B cell (primary cell): ENCODE measurements at regions of chr11 and their contacts with region 1.

Region 1: GRCh38 chr11:68839054-68839865 is 2.5 kb downstream of the CPT1A start:
- DNase-seq: peak; percentile 94
- ATAC-seq: peak; percentile 64
- H3K4me3 ChIP-seq: peak overlapping the region; percentile 27 to 76 (median 70)
- H3K4me3 Mint-ChIP-seq: peak overlapping the region; percentile 93
- H3K27ac ChIP-seq: peak overlapping the region; percentile 68 to 76
- H3K27ac Mint-ChIP-seq: peak overlapping the region; percentile 97
- H3K4me1 ChIP-seq: peaks cover 37 to 57% of the 10 kb centered on the region in 2 donors
- H3K4me1 Mint-ChIP-seq: peaks cover 57% of the 10 kb centered on the region
- H3K27me3 ChIP-seq: no peaks in the 10 kb centered on the region
- H3K27me3 Mint-ChIP-seq: no peaks in the 10 kb centered on the region
- CTCF ChIP-seq: no peak

Region 2: GRCh38 chr11:68271781-68272608 is 567.3 kb before region 1 on chr11 and contains the start of gene C11orf24:
- CTCF ChIA-PET with region 1: no interaction called
- POLR2A ChIA-PET with region 1: no interaction called
- intact Hi-C with region 1: loop called (anchors 2 kb)
- DNase-seq: peak; percentile 98
- ATAC-seq: peak; percentile 74
- H3K4me3 ChIP-seq: peak within 1 kb of the TSS; percentile 62 to 99 (median 98)
- H3K4me3 Mint-ChIP-seq: peak within 1 kb of the TSS; percentile 91
- H3K27ac ChIP-seq: peak within 1 kb of the TSS; percentile 98
- H3K27ac Mint-ChIP-seq: peak within 1 kb of the TSS; percentile 97
- H3K4me1 ChIP-seq: peaks cover 58 to 70% of the 10 kb centered on the region in 2 donors
- H3K4me1 Mint-ChIP-seq: peaks cover 74% of the 10 kb centered on the region
- H3K27me3 ChIP-seq: no peaks in the 10 kb centered on the region
- H3K27me3 Mint-ChIP-seq: no peaks in the 10 kb centered on the region
- CTCF ChIP-seq: no peak
- total RNA-seq, gene C11orf24: 81.8 and 88.6 TPM in 2 replicates

Region 3: DNA sequence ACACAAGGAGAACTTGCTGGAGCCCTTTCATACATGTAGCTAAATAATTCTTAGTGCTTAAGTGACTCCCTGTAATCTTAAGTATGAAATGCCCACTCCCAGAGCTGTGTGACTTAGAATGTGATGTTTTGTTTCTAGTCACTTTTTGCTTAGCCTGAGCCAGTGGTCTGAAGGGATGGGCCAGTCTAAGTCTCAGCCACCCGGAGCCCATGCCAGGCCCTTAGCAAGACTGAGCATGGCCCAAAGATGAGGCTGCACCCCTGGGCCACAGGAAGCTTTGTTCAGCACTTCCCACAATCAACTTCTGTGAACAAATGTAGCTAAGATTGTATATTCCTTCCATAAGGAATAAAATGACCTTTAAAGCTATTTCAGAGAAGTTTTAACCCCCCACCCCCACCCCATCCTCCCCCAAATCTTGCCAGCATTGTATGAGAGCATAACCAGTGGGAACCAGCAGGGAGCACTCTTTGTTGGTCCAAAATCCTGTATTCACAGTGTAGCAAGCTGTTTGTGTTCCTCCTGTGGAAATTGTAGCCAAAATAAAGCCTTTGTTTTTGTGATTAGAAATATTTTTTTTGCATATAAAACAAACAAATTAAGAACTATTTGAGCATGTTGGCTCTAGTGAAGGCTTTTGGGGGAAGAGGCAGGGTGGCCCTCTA is 228.7 kb before region 1 on chr11:
- CTCF ChIA-PET with region 1: interaction called, 14 read pairs
- POLR2A ChIA-PET with region 1: no interaction called
- intact Hi-C with region 1: loop called (anchors 10 kb)
- DNase-seq: no peak
- ATAC-seq: no peak
- H3K4me3 ChIP-seq: no peak overlapping the region
- H3K4me3 Mint-ChIP-seq: no peak overlapping the region
- H3K27ac ChIP-seq: no peak overlapping the region
- H3K27ac Mint-ChIP-seq: no peak overlapping the region
- H3K4me1 ChIP-seq: no peaks in the 10 kb centered on the region
- H3K4me1 Mint-ChIP-seq: no peaks in the 10 kb centered on the region
- H3K27me3 ChIP-seq: no peaks in the 10 kb centered on the region
- H3K27me3 Mint-ChIP-seq: no peaks in the 10 kb centered on the region
- CTCF ChIP-seq: no peak

Region 4: DNA sequence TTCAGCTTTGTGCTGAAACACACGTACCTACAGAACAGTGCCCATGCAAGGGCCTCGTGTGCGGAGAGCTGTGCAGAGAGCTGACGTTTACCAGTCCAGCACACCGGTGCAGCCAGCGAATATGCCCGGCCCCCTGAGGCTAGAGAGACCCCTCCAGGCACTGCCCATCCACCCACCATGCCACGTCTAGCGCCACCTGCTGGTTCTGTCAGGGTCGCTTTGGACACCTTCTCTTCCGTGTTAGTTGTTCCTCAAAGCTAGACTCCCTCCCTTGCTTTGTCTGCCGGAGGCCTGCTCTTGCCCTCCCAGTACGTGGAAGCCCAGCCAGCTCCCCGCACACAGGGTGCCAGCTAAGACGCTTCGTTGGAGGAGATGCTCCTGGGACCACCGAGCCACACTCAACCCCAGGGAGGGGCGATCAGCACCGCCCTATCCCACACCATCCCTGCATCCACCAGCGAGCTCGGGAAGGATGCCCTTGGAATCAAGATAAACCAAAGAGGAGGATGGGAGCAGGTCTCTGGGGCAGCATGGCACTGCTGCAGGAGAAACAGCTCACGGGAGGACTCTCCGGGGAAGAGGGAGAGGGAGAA is 40.9 kb before region 1 on chr11:
- CTCF ChIA-PET with region 1: interaction called, 37 read pairs
- POLR2A ChIA-PET with region 1: no interaction called
- intact Hi-C with region 1: no loop called
- DNase-seq: peak; percentile 51
- ATAC-seq: no peak
- H3K4me3 ChIP-seq: no peak overlapping the region
- H3K4me3 Mint-ChIP-seq: no peak overlapping the region
- H3K27ac ChIP-seq: no peak overlapping the region
- H3K27ac Mint-ChIP-seq: no peak overlapping the region
- H3K4me1 ChIP-seq: no peaks in the 10 kb centered on the region
- H3K4me1 Mint-ChIP-seq: no peaks in the 10 kb centered on the region
- H3K27me3 ChIP-seq: no peaks in the 10 kb centered on the region
- H3K27me3 Mint-ChIP-seq: no peaks in the 10 kb centered on the region
- CTCF ChIP-seq: peak; percentile 75

Region 5: GRCh38 chr11:68825571-68825970 is 13.7 kb before region 1 on chr11:
- CTCF ChIA-PET with region 1: interaction called, 70 read pairs
- POLR2A ChIA-PET with region 1: interaction called, 8 read pairs
- intact Hi-C with region 1: loop called (anchors 1 kb)
- DNase-seq: peak; percentile 70
- ATAC-seq: peak; percentile 82
- H3K4me3 ChIP-seq: no peak overlapping the region
- H3K4me3 Mint-ChIP-seq: peak overlapping the region; percentile 34
- H3K27ac ChIP-seq: no peak overlapping the region
- H3K27ac Mint-ChIP-seq: peak overlapping the region; percentile 37
- H3K4me1 ChIP-seq: peaks cover 29 to 36% of the 10 kb centered on the region in 2 donors
- H3K4me1 Mint-ChIP-seq: peaks cover 48% of the 10 kb centered on the region
- H3K27me3 ChIP-seq: no peaks in the 10 kb centered on the region
- H3K27me3 Mint-ChIP-seq: no peaks in the 10 kb centered on the region
- CTCF ChIP-seq: peak; percentile 17

Region 6: DNA sequence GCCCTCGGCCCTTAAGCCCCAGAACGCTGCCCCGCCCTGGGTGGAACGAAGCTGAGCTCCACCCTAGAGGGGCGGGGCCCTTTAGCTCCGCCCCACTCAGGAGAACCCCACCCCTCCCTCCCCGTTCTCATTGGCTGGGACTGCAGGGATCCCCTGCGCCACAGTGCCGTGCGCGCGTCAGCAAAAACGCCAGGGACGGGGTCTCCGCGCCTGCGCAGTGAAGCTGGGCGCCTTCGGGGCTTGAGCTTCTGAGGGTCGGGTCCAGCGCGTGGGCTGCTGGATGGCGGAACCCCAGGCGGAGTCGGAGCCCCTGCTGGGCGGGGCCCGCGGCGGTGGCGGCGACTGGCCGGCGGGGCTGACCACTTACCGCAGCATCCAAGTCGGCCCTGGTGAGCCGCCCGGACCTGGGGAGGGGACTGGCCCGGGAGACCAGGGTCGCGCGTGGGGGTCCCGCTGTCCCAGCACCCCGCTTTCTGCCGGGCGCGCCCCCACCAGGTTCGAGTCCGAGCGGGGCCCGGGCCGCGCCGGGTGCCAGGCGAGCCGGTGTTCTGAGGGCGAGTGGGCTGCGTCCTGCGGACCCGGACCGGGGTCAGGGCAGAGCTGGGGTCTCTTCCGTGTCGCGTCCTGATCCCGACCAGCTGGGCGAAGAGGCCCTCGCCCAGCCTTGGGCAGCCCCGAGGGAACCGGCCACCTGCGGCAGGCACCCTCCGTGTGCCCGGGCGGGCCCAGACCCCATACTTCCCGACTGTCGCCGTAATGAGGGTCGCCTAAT is 209.6 kb after region 1 on chr11 and contains the start of gene TPCN2:
- CTCF ChIA-PET with region 1: interaction called, 3 read pairs
- POLR2A ChIA-PET with region 1: no interaction called
- intact Hi-C with region 1: loop called (anchors 1 kb)
- DNase-seq: peak; percentile 97
- ATAC-seq: peak; percentile 98
- H3K4me3 ChIP-seq: peak within 1 kb of the TSS; percentile 34 to 99 (median 86)
- H3K4me3 Mint-ChIP-seq: peak within 1 kb of the TSS; percentile 85
- H3K27ac ChIP-seq: peak within 1 kb of the TSS; percentile 75 to 98
- H3K27ac Mint-ChIP-seq: peak within 1 kb of the TSS; percentile 82
- H3K4me1 ChIP-seq: peaks cover 17 to 54% of the 10 kb centered on the region in 2 donors
- H3K4me1 Mint-ChIP-seq: peaks cover 38% of the 10 kb centered on the region
- H3K27me3 ChIP-seq: no peaks in the 10 kb centered on the region
- H3K27me3 Mint-ChIP-seq: peaks cover 9% of the 10 kb centered on the region
- CTCF ChIP-seq: no peak
- total RNA-seq, gene TPCN2: 71.4 and 76.2 TPM in 2 replicates

Region 7: DNA sequence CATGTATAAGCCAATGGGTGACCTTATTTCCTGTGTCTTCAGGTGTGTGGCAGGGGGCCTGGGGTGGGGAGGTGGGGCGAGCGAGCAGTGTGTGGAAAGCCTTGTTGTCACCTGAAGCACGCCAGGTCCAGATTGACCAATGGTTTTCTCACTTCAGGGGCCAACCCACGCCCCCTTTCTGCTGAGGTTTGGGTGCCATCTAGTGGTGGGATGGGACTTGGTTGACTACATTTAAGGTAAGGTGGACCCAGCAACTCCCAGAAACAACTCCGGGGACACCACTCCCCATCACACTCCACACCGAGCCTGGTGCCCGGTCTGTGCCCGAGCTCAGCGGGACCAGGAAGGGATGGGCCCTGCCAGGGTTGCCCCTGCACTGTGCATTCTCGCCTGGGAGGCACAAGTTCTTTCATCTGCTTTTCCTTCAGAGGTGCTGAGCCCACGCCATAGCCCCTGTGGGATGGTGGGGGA is 249.5 kb after region 1 on chr11:
- CTCF ChIA-PET with region 1: interaction called, 5 read pairs
- POLR2A ChIA-PET with region 1: no interaction called
- intact Hi-C with region 1: loop called (anchors 1 kb)
- DNase-seq: peak; percentile 82
- ATAC-seq: peak; percentile 80
- H3K4me3 ChIP-seq: no peak overlapping the region
- H3K4me3 Mint-ChIP-seq: no peak overlapping the region
- H3K27ac ChIP-seq: no peak overlapping the region
- H3K27ac Mint-ChIP-seq: no peak overlapping the region
- H3K4me1 ChIP-seq: no peaks in the 10 kb centered on the region
- H3K4me1 Mint-ChIP-seq: peaks cover 2% of the 10 kb centered on the region
- H3K27me3 ChIP-seq: no peaks in the 10 kb centered on the region
- H3K27me3 Mint-ChIP-seq: no peaks in the 10 kb centered on the region
- CTCF ChIP-seq: peak; percentile 75